ENCODE measurements at regions of chr12 and their contacts with region 1.

Region 1: DNA sequence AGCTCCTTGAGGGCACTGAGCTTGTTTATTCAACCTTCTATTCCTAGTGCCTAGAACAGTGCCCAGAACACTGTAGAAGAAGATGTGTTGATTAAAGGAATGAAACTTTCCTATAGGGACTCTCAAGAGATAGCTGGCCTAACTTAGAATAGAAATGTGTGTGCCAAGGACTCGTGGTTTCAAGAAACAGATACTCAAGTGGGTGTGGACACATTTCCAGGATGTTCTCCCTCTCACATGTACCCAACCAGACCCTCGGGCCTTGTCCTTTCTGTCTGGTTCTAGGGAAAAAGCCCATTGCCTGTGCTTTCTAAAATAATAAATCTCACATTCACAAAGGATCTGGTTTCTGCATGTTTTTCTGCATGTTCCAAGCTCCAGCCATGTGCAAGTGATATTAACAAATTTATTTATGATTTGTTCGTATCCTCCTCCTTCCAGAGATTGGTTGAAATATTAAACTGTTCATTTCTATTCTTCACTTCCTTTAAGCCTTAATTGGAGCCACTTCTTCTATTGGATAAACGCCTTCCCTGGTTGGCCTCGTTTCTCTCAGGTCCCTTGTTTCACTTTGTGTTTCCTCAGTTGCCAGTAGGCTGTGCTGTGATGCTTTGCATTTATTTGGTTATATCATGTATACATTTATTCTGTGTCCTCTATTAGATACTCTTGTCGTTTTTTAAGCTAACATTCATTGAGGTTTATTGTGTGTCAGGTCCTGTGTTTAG is 89.8 kb downstream of the CRADD start:
- DNase-seq: peak; percentile 74
- H3K4me3 Mint-ChIP-seq: no peak overlapping the region
- H3K27ac Mint-ChIP-seq: peak overlapping the region; percentile 84
- H3K4me1 Mint-ChIP-seq: peaks cover 69% of the 10 kb centered on the region
- H3K27me3 Mint-ChIP-seq: peaks cover 8% of the 10 kb centered on the region

Region 2: DNA sequence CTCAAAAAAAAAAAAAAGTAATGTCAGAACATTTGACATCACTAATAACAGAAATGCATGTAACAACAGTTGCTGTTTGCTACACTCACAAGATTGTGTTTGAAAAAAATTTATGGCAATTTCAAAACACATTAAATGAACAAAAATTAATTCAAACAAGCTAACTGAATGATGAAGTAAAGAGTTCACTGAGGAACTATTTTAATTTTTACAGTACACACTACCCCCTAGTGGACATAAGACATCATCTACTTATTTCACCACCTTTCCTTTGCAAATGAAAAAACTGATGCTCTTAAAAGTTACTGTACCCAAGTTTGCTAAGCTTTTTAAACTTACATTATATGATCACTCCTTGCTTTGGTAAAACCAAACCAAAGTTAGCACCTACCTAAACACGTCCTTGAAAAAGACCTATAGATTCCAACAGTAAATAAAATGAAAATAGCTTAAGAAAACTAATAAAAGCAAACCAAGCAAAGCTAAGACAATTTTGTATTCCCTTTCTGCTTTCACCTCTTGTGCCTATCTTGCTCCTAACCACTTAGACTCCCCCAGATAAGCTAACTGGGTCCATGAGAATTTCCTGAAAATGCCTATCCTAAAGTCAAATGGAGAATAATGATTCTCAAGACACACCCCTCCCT is 347.4 kb before region 1 on chr12:
- CTCF ChIA-PET with region 1: no interaction called
- DNase-seq: no peak
- H3K4me3 Mint-ChIP-seq: no peak overlapping the region
- H3K27ac Mint-ChIP-seq: no peak overlapping the region
- H3K4me1 Mint-ChIP-seq: peaks cover 69% of the 10 kb centered on the region
- H3K27me3 Mint-ChIP-seq: no peaks in the 10 kb centered on the region

Region 3: DNA sequence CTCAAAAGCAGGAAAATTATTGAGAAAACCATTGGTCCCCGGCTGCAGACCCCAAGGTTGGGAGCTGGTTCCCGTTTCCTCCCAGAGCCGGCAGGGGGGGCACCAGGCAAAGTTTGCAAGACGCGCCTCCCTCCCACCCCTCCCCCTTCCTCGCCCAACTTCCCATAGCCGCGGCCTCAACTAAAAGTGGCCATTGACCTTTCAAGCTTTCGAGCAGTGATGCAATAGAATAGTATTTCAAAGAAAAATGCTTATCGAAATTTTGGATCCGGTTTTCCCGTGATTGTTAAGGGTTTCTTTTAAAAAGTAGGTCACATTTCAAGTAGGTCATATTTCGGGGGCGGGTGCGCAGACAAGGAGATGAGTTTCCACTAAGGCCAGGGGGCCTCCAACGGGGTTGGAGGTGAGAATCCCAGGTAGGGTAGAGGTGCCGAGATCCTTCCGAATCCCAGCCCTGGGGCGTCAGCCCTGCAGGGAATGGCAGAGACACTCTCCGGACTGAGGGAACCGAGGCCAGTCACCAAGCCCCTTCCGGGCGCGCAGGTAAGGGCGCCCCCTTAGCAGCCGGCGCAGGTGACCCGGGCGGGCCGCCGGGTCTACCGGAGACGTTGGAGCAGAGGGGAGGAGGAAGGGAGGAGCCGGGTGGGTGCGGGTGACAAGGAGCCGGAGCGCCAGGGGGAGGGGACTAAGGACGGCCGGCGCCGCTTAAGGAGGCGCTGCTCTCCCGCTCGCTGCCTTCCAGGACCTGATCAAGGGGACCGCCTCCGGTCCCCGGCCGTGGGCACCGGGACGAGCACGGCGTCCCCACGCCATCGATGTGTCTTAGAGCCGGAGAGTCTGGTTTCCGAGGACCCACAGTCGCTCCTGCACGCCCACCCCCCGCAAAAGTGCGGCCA is 197.1 kb before region 1 on chr12:
- CTCF ChIA-PET with region 1: interaction called, 27 read pairs
- DNase-seq: peak; percentile 89
- H3K4me3 Mint-ChIP-seq: peak overlapping the region; percentile 81
- H3K27ac Mint-ChIP-seq: peak overlapping the region; percentile 93
- H3K4me1 Mint-ChIP-seq: peaks cover 39% of the 10 kb centered on the region
- H3K27me3 Mint-ChIP-seq: peaks cover 18% of the 10 kb centered on the region

Region 4: DNA sequence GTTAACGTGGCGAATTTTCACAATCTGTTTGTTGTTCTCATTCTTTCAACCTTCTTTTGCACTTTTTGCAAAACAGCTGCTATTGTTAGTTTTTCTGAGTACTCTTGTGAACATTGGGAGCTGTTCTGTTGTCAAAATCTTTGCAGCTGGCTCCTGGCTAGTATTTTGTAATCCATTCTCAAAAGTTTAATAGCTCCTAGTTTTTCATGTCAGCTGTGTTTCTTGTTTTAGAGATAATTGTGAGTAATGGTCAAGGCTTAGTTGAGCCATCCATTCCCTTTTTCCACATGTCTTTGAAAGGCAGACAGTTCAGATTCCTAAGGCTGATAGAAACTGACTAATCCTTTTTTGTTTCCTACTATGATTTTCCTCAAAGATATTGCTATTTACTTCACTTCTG is 128.9 kb before region 1 on chr12:
- CTCF ChIA-PET with region 1: no interaction called
- DNase-seq: no peak
- H3K4me3 Mint-ChIP-seq: no peak overlapping the region
- H3K27ac Mint-ChIP-seq: no peak overlapping the region
- H3K4me1 Mint-ChIP-seq: no peaks in the 10 kb centered on the region
- H3K27me3 Mint-ChIP-seq: peaks cover 28% of the 10 kb centered on the region

Region 5: GRCh38 chr12:93802698-93803423 is 35.9 kb after region 1 on chr12:
- CTCF ChIA-PET with region 1: interaction called, 12 read pairs
- DNase-seq: no peak
- H3K4me3 Mint-ChIP-seq: no peak overlapping the region
- H3K27ac Mint-ChIP-seq: no peak overlapping the region
- H3K4me1 Mint-ChIP-seq: peaks cover 36% of the 10 kb centered on the region
- H3K27me3 Mint-ChIP-seq: no peaks in the 10 kb centered on the region

Region 6: DNA sequence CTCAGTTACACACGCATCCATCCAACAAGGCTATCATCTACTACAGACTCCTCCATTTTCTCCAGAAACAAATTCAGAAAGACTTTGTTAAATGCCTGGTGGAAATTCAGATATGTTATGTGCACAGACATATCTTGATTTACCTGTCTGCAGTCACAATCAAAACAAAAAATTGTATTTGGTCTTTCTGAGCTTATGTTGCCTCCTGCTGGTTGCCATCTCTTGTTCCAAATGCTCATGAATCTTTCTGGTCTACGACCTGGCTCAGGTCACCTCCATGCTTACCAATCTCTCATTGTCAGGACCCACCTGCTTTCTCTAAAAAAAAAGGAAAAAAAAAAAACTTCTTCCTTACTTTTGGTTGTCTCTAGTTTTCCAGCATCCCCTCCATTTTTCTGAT is 212.2 kb after region 1 on chr12:
- CTCF ChIA-PET with region 1: interaction called, 74 read pairs
- DNase-seq: peak; percentile 62
- H3K4me3 Mint-ChIP-seq: no peak overlapping the region
- H3K27ac Mint-ChIP-seq: no peak overlapping the region
- H3K4me1 Mint-ChIP-seq: peaks cover 47% of the 10 kb centered on the region
- H3K27me3 Mint-ChIP-seq: peaks cover 19% of the 10 kb centered on the region

Region 7: DNA sequence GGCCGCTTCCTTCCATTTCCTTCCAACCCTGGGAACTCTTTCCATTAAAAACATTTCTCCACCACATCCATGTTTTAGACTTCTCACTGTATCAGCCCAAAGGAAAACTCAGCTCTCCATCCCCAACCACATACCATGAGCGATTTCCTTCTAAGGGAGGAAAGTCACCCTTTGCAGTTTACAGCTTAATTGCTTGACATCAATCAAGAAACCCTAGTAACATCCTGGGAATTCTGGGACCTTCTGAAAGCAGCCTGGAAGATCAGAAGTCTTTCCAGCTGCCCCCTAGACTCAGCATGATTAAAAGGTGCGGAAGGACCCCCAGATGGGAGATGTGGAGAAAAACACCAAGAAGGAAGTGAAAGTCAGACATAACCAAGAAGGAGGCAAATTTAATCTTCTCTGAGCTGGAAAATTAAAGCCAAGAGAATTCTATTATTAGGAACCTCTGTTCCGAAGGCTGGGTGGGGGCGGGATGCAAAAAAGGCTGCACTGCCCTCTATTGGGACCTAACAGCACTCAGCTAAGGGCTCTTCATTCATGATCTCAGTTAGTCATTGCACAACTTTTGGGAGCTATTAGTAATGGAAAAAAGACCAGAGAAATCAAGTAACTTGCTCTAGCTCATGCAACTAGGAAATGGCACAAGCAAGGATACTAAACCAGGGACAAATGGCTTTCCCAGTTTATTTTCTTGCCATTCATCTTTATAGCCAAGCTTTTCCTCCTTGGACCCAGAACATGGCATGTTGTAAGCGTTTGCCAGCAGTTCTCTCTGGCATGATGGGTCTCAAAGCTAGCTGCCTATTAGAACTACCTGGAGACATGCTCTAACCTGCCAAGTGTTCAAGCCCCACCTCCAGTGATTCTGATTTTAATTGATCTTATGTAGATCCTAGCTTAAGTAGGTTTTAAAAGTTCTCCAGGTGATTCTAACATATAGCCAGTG is 308.3 kb after region 1 on chr12:
- CTCF ChIA-PET with region 1: interaction called, 36 read pairs
- DNase-seq: peak; percentile 30
- H3K4me3 Mint-ChIP-seq: no peak overlapping the region
- H3K27ac Mint-ChIP-seq: no peak overlapping the region
- H3K4me1 Mint-ChIP-seq: peaks cover 34% of the 10 kb centered on the region
- H3K27me3 Mint-ChIP-seq: peaks cover 12% of the 10 kb centered on the region